Activated T-helper 1 cell treated with anti-CD3 and anti-CD28 coated beads, Interleukin-12 subunit alpha, Interleukin-12 subunit beta, Interleukin-2, Interleukin-4 antibody, amounts not matched to agents 30 ng/mL and 10 ng/mL and 1 ng/mL, durations not matched to agents 14 hours and 24 hours and 36 hours (primary cell): ENCODE measurements at regions of chr2 and their contacts with region 1.

Region 1: DNA sequence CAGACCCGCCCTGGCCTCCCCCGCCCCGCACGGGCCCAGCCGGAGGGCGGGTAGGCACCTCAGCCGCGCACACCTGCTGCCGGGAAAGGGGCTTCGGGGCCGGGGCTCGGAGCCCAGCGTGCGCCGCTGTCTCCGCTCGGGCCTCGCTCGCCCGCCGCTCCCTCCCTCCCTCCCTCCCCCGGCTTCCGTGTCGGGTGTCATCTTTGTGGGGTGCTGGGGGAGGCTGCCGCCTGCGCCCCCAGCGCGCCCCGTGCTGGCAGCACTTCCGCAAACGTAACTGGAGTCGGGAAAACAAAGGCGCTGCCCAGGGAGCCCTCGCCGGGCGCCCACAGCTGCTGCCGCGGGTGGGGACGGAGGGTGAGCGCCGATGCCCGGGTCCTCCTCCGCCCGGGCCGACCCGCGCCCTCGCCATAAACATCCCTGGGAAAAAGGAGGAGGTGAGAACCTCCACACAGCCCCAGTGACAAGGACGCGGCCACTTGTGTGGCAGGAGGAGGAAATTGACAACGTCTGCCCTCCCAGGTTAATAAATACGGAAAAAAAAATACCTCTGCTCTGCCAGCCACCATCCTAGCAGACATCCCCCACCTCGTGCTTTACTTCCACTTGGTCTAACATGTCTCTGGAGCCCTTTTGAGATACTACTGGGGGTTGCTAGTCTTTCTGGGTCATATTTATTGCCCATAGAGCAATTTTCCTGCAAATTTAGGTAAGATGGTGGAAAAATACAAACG is 550 bp downstream of the MFSD6 start:
- DNase-seq: peak; percentile 66
- H3K4me3 Mint-ChIP-seq: peak overlapping the region; percentile 90
- H3K27ac Mint-ChIP-seq: peak overlapping the region; percentile 94
- H3K4me1 Mint-ChIP-seq: peaks cover 44% of the 10 kb centered on the region
- H3K27me3 Mint-ChIP-seq: no peaks in the 10 kb centered on the region

Region 2: DNA sequence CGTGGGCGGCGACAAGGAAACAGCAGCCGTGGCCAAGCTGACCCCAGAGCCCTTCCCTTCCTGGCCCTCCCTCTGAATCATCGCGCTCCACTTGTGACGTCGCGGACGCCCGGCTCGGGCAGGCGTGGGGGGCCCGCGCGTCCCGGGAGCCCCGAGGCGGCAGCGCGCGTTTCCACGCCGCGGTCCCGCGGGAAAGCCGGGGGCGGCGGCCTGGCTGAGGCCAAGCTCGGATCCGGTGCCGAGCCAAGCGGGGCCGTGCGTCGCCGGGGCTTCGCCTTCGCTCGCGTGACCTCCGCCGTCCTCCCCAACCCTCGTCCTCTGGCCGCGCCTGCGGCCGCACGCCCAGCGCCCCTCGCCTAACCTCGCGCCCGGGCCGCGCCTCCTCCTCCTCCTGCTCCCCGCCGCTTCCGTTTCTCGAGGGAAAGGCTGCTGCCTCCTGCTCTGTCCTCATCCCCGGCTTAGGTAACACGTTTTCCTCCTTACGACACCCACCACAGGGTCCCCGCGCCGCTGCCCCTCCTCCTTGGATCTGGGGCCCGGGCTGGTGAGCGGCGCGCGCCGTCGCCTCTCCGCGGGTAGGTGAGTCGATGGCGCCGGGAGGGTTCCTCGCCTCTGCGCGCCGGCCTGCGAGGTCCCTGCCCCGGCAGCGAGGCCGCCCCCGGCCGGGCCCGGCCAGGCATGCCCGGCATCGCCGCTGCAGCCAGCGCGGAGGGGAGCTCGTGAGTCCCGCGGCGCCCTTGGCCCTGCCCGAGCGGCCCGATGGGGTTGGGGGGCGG is 65.0 kb before region 1 on chr2 and contains the start of gene INPP1:
- intact Hi-C with region 1: loop called (anchors 5 kb)
- DNase-seq: peak; percentile 29
- H3K4me3 Mint-ChIP-seq: peak within 1 kb of the TSS; percentile 87
- H3K27ac Mint-ChIP-seq: peak within 1 kb of the TSS; percentile 88
- H3K4me1 Mint-ChIP-seq: peaks cover 27% of the 10 kb centered on the region
- H3K27me3 Mint-ChIP-seq: peaks cover 17% of the 10 kb centered on the region
- total RNA-seq, gene INPP1: 7.7 and 9.8 TPM in 2 replicates

Region 3: GRCh38 chr2:190432567-190433231 is 24.0 kb after region 1 on chr2:
- intact Hi-C with region 1: loop called (anchors 2 kb)
- DNase-seq: no peak
- H3K4me3 Mint-ChIP-seq: no peak overlapping the region
- H3K27ac Mint-ChIP-seq: peak overlapping the region; percentile 41
- H3K4me1 Mint-ChIP-seq: peaks cover 54% of the 10 kb centered on the region
- H3K27me3 Mint-ChIP-seq: no peaks in the 10 kb centered on the region

Region 4: DNA sequence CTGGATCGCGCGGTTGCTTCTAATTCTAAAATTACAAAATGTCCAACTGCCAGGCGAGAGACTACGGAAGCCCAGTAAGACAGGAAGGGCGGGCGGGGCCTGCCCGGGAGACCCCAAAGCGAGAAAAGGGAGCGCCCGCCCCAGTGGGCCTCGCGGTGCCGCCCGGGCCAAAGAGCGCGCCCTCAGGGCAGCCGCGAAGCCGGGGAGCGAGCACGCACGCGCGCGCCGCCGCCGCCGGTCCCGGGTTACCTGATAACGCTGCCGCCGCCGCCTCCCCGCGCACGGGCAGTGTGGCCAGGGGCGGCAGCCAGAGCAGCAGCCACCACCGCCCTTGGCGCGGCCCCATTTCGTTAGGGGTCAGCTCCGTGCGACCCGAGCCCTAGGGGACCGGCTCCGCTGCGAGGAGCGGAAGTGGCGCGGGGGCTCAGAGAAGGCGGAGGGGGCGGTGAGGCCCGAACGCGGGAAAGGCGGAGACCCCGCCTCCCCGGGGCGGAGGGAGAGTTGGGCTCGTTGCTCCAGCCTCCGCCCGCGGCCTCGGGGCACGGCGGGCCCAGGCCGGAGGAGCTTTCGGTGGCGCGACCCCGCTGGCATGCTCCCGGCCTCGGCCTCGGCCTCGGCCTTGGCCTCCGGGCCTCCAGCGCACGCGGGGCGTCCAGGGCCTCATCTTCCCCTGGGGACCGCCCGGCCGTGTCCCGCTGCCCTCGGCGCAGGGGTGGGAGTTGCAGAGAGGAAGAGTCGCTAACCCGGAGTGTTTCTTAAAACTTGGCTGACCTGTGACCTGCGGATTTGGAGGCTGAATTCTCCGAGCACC is 125.8 kb after region 1 on chr2 and contains the start of gene NEMP2:
- intact Hi-C with region 1: loop called (anchors 1 kb)
- DNase-seq: peak; percentile 82
- H3K4me3 Mint-ChIP-seq: peak within 1 kb of the TSS; percentile 95
- H3K27ac Mint-ChIP-seq: peak within 1 kb of the TSS; percentile 99
- H3K4me1 Mint-ChIP-seq: peaks cover 57% of the 10 kb centered on the region
- H3K27me3 Mint-ChIP-seq: no peaks in the 10 kb centered on the region
- total RNA-seq, gene NEMP2: 11.7 and 13.6 TPM in 2 replicates

Region 5: GRCh38 chr2:190679813-190680591 is 271.3 kb after region 1 on chr2:
- intact Hi-C with region 1: loop called (anchors 1 kb)
- DNase-seq: peak; percentile 27
- H3K4me3 Mint-ChIP-seq: peak overlapping the region; percentile 69
- H3K27ac Mint-ChIP-seq: peak overlapping the region; percentile 87
- H3K4me1 Mint-ChIP-seq: peaks cover 53% of the 10 kb centered on the region
- H3K27me3 Mint-ChIP-seq: no peaks in the 10 kb centered on the region

Region 6: GRCh38 chr2:190843874-190844699 is 435.4 kb after region 1 on chr2:
- intact Hi-C with region 1: loop called (anchors 2 kb)
- DNase-seq: peak; percentile 17
- H3K4me3 Mint-ChIP-seq: peak overlapping the region; percentile 44
- H3K27ac Mint-ChIP-seq: peak overlapping the region; percentile 96
- H3K4me1 Mint-ChIP-seq: peaks cover 15% of the 10 kb centered on the region
- H3K27me3 Mint-ChIP-seq: no peaks in the 10 kb centered on the region

Region 7: DNA sequence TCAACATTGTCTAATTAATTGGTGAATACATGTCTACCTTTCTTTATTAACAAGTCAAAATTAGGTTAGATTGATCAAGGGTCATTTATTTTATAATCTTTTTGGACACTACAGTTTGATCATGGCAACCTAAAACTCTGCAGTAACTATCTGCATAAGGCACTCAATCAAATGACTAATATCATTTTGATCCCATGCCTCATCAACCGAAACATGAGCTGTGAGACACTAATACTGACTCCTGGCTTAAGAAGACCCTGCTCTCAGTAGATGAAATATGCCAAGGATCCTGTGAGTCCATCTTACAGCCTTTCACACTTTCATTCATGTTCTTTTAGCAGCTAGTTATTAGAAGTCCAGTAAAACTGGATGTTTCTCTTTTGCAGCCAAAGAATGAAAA is 1607.6 kb after region 1 on chr2:
- intact Hi-C with region 1: no loop called
- DNase-seq: no peak
- H3K4me3 Mint-ChIP-seq: no peak overlapping the region
- H3K27ac Mint-ChIP-seq: no peak overlapping the region
- H3K4me1 Mint-ChIP-seq: no peaks in the 10 kb centered on the region
- H3K27me3 Mint-ChIP-seq: peaks cover 10% of the 10 kb centered on the region